WTC11 (cell line): ENCODE measurements at regions of chr12 and their contacts with region 1.

Region 1: DNA sequence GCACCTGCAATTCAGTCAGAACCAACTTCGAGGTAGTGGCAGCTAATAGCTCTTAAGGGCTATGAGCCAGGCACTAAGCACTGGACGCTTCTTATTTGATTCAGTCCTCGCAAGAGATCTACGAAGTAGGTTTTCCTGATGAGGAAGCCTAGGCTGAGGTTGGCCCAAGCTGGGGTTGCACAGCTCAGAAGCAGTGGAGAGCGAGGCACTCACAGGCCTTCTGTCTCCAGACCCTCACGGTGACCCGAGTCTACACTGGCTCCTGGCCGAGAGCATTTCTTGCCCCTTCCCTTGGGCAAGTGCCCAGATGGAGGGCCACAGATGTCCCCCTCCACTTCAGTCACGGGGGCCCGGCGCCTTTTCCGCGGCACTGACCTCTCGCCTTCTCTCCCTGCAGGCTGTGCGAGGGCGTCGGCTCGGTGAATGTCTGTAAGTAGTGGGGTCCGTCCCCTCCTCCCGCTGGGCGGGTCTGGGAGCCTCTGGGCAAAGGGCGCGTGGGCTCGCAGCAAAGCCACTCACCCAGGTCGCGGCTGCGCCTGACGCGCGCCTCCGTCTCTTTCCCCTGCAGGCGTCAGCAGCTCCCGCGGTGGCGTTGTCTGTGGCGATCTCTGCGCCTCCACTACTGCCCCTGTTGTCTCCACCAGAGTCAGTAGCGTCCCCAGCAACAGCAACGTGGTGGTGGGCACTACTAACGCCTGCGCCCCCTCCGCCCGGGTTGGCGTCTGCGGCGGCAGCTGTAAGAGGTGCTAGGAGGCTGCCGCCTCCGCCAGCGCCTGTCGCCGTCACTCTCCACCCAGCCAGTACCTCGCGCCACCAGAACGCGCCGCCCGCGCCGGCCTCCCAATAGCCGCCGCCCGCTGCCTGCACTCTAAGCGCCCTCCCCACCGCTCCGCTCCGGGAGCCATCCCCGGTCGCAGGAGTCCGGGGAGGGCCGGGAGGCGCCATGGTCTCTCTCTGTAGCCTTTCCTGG is 13.1 kb downstream of the KRT83 start:
- DNase-seq: peak; percentile 77
- ATAC-seq: peak; percentile 86
- H3K4me3 Mint-ChIP-seq: peak overlapping the region; percentile 76
- H3K27ac Mint-ChIP-seq: no peak overlapping the region
- H3K4me1 Mint-ChIP-seq: peaks cover 17% of the 10 kb centered on the region
- H3K27me3 Mint-ChIP-seq: peaks cover 57% of the 10 kb centered on the region
- CTCF ChIP-seq: no peak

Region 2: DNA sequence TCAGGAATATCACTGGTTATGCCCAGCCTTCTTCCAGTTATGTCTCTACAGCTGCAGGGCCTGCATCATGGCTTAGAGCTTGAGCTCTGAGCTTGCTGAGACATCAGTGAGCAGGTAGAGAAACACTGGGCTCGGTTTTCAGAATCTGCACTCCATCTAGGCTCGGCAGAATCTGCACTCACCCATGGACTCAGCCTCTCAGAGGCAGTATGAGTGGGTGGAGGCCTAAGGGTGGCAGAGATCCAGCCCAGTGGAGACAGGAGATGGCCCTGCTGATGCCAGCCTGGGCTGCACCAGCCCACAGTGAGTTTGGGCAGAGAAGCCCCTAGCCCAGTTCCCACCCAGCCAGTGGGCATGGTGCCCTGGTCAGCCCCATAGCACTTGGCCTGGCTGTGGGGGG is 129.1 kb before region 1 on chr12:
- CTCF ChIA-PET with region 1: no interaction called
- POLR2A ChIA-PET with region 1: no interaction called
- DNase-seq: no peak
- ATAC-seq: no peak
- H3K4me3 Mint-ChIP-seq: no peak overlapping the region
- H3K27ac Mint-ChIP-seq: no peak overlapping the region
- H3K4me1 Mint-ChIP-seq: peaks cover 33% of the 10 kb centered on the region
- H3K27me3 Mint-ChIP-seq: no peaks in the 10 kb centered on the region; the same call in 1 of the 2 replicates
- CTCF ChIP-seq: no peak

Region 3: DNA sequence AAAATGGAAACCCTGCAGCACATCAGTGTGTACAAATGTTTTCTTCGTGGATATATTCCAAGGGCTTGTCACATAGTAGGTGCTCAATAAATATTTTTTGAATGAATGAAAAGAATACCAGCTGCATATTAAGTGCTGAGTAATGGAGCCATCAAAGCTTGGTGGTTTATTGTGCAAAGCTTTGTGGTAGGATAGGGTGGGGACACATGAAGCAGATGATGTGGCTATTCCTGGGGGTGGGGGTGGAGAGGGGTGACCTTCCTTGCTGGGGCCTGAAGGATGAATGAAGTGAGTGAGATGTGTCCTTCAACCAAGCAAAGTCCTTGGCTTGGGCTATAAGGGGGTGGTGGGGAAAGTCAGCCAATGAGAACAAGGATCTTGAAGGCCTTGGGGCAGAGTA is 12.5 kb before region 1 on chr12:
- CTCF ChIA-PET with region 1: interaction called, 12 read pairs
- POLR2A ChIA-PET with region 1: no interaction called
- DNase-seq: no peak
- ATAC-seq: no peak
- H3K4me3 Mint-ChIP-seq: no peak overlapping the region
- H3K27ac Mint-ChIP-seq: no peak overlapping the region
- H3K4me1 Mint-ChIP-seq: no peaks in the 10 kb centered on the region
- H3K27me3 Mint-ChIP-seq: peaks cover 3% of the 10 kb centered on the region
- CTCF ChIP-seq: no peak

Region 4: GRCh38 chr12:52319097-52319496 is 11.0 kb after region 1 on chr12:
- CTCF ChIA-PET with region 1: interaction called, 11 read pairs
- POLR2A ChIA-PET with region 1: no interaction called
- DNase-seq: peak; percentile 27
- ATAC-seq: peak; percentile 47
- H3K4me3 Mint-ChIP-seq: no peak overlapping the region
- H3K27ac Mint-ChIP-seq: no peak overlapping the region
- H3K4me1 Mint-ChIP-seq: no peaks in the 10 kb centered on the region
- H3K27me3 Mint-ChIP-seq: peaks cover 5% of the 10 kb centered on the region; the same call in 1 of the 2 replicates
- CTCF ChIP-seq: no peak